HepG2 (cell line): ENCODE measurements at regions of chr3 and their contacts with region 1.

Region 1: GRCh38 chr3:130699765-130700164 is 46.9 kb downstream of the PIK3R4 start:
- DNase-seq: peak; percentile 30
- ATAC-seq: peak; percentile 51; the same call in 2 of the 3 replicates
- H3K4me3 ChIP-seq: no peak overlapping the region
- H3K27ac ChIP-seq: no peak overlapping the region
- H3K4me1 ChIP-seq: peaks cover 15% of the 10 kb centered on the region
- H3K27me3 ChIP-seq: no peaks in the 10 kb centered on the region
- CTCF ChIP-seq: peak; percentile 51
- EP300 ChIP-seq: no peak
- POLR2A ChIP-seq: no peak
- RAD21 ChIP-seq: no peak

Region 2: GRCh38 chr3:130737622-130738021 is 37.9 kb after region 1 on chr3:
- CTCF ChIA-PET with region 1: no interaction called
- POLR2A ChIA-PET with region 1: no interaction called
- in situ Hi-C with region 1: no loop called
- intact Hi-C with region 1: no loop called
- DNase-seq: no peak
- ATAC-seq: no peak
- H3K4me3 ChIP-seq: no peak overlapping the region
- H3K27ac ChIP-seq: no peak overlapping the region
- H3K4me1 ChIP-seq: peaks cover 35% of the 10 kb centered on the region
- H3K27me3 ChIP-seq: no peaks in the 10 kb centered on the region
- CTCF ChIP-seq: no peak
- EP300 ChIP-seq: no peak
- POLR2A ChIP-seq: no peak
- RAD21 ChIP-seq: no peak

Region 3: GRCh38 chr3:130759699-130760338 is 60.1 kb after region 1 on chr3:
- CTCF ChIA-PET with region 1: interaction called, 6 read pairs
- POLR2A ChIA-PET with region 1: no interaction called
- in situ Hi-C with region 1: no loop called
- intact Hi-C with region 1: loop called (anchors 5 kb)
- DNase-seq: peak; percentile 41
- ATAC-seq: peak; percentile 72
- H3K4me3 ChIP-seq: no peak overlapping the region
- H3K27ac ChIP-seq: no peak overlapping the region
- H3K4me1 ChIP-seq: no peaks in the 10 kb centered on the region
- H3K27me3 ChIP-seq: peaks cover 0 to 2% of the 10 kb centered on the region in 2 experiments; a peak in 2 of 5 replicates
- CTCF ChIP-seq: peak; percentile 73
- EP300 ChIP-seq: no peak
- POLR2A ChIP-seq: no peak
- RAD21 ChIP-seq: peak; percentile 44; the same call in 1 of the 2 replicates